ENCODE measurements at regions of chr19 and their contacts with region 1.

Region 1: DNA sequence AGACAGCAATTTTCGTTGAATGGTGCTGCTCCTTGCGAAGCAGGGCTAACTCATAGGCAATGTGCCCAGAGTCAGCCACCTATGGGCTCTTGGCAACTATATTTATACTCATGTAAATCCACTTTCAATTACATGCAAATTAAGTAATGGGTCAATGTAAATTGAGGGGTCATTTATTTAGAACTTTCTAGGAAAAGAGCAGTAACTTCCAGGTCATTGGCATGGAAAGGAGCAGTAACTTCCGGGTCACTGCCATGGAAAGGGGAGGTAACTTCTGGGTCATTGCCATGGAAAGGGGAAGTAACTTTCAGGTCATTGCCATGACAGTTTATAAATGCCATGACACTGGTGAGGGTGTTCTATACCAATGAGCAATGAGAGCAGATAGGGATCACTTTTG is 11.6 kb downstream of the KLK4 start:
- DNase-seq: no peak
- H3K4me3 ChIP-seq: no peak overlapping the region
- H3K27ac ChIP-seq: no peak overlapping the region
- H3K4me1 ChIP-seq: no peaks in the 10 kb centered on the region
- H3K27me3 ChIP-seq: peaks cover 0 to 3% of the 10 kb centered on the region in 2 donors
- CTCF ChIP-seq: no peak
- POLR2A ChIP-seq: no peak

Region 2: DNA sequence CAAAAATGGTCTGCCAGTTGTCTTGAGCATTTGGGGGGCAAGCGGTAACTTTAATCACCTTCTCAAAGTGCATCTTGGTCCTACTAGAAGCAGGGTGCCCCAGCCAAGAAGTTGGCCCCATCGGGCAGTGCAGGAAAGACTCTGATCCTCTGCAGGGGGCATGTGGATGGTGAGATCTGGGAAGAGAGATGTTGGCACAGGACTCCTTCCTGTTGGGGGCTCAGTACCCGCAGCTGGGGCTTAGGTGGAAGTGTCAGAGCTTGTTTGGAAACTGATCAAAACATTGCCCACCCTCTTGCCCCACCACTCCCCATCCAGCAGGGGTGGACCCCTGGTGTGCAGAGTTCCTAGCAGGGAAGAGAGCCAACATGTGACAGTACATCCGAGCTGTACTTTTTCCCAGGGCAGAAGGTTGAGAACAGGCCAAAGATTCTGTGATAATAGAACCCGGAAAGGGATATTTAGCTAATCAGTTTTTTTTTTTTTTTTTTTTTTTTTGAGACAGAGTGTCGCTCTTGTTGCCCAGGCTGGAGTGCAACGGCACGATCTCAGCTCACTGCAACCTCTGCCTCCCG is 1268.5 kb before region 1 on chr19:
- intact Hi-C with region 1: no loop called
- DNase-seq: no peak
- H3K4me3 ChIP-seq: no peak overlapping the region
- H3K27ac ChIP-seq: peak overlapping the region in 1 of 2 donors; percentile 74
- H3K4me1 ChIP-seq: no peaks in the 10 kb centered on the region
- H3K27me3 ChIP-seq: no peaks in the 10 kb centered on the region
- CTCF ChIP-seq: no peak
- POLR2A ChIP-seq: no peak

Region 3: GRCh38 chr19:50817941-50818858 is 81.4 kb before region 1 on chr19:
- intact Hi-C with region 1: no loop called
- DNase-seq: no peak
- H3K4me3 ChIP-seq: peak overlapping the region in 2 of 3 donors; percentile 41 to 60
- H3K27ac ChIP-seq: no peak overlapping the region
- H3K4me1 ChIP-seq: no peaks in the 10 kb centered on the region
- H3K27me3 ChIP-seq: peaks cover 0 to 61% of the 10 kb centered on the region in 2 donors
- CTCF ChIP-seq: no peak
- POLR2A ChIP-seq: no peak

Region 4: DNA sequence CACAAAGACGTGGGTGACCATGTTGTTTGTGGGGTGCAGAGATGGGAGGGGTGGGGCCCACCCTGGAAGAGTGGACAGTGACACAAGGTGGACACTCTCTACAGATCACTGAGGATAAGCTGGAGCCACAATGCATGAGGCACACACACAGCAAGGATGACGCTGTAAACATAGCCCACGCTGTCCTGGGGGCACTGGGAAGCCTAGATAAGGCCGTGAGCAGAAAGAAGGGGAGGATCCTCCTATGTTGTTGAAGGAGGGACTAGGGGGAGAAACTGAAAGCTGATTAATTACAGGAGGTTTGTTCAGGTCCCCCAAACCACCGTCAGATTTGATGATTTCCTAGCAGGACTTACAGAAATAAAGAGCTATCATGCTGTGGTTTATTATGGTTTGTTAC is 20.7 kb before region 1 on chr19:
- intact Hi-C with region 1: loop called (anchors 1 kb)
- DNase-seq: no peak
- H3K4me3 ChIP-seq: no peak overlapping the region
- H3K27ac ChIP-seq: no peak overlapping the region
- H3K4me1 ChIP-seq: no peaks in the 10 kb centered on the region
- H3K27me3 ChIP-seq: peaks cover 0 to 12% of the 10 kb centered on the region in 2 donors
- CTCF ChIP-seq: no peak
- POLR2A ChIP-seq: no peak